ENCODE measurements at regions of chr19 and their contacts with region 1.

Region 1: DNA sequence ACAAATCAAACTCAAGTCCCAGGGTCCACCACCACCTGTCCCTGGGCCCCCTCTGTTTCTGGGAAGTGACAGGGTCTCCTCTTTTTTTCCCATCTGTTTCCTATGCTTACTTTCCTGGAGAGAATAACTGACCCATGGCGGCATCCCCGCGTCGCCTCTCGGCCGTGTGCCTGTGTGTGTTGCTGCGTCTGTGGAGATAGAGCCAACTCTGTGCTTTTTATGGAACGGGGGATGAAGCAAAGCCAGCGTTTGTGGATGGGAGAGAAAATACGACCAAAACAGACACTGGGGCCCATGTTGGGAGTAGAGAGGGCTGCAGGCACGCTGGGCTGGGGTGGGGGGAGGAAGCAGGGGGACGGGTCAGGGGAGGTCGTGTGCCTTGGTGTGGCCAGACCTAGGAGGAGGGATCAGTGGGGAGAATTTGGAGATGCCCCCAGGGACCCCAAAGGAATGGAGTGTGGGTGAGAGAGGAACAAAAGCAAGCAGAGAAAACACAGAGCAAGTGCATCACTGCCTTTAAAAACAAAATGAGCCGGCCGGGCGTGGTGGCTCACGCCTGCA is 16.6 kb downstream of the PLK5 start:
- DNase-seq: no peak
- H3K4me3 Mint-ChIP-seq: no peak overlapping the region
- H3K27ac Mint-ChIP-seq: no peak overlapping the region
- H3K4me1 Mint-ChIP-seq: no peaks in the 10 kb centered on the region
- H3K27me3 Mint-ChIP-seq: peaks cover 13% of the 10 kb centered on the region

Region 2: DNA sequence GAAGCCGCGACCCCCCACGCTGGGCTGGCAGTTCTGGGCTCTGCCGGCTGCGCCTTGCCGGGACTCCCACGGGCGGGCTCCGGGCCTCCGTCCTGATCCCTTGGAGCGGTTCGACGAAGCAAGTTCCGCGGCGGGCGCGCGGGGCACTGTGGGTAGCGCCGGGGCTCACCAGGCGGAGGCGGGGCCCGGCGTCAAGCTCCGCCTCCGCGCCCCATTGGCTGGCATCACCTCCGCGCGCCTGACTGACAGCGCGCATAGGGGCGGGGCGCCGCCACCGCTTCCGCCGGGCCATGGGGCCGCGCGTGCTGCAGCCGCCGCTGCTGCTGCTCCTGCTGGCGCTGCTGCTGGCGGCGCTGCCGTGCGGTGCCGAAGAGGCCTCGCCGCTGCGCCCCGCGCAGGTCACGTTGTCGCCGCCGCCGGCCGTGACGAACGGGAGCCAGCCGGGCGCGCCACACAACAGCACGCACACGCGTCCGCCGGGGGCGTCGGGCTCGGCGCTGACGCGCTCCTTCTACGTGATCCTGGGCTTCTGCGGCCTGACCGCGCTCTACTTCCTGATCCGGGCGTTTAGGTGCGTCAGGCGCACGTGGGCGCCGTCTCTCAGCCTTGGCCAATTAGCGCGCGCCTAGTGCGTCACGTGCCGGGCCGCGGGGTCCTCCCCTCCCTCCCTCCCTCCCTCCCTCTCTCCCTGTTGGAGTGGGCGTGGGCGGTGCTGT is 265.0 kb before region 1 on chr19 and contains the start of gene FAM174C:
- CTCF ChIA-PET with region 1: no interaction called
- POLR2A ChIA-PET with region 1: no interaction called
- DNase-seq: peak; percentile 96
- H3K4me3 Mint-ChIP-seq: peak within 1 kb of the TSS; percentile 82
- H3K27ac Mint-ChIP-seq: peak within 1 kb of the TSS; percentile 96
- H3K4me1 Mint-ChIP-seq: peaks cover 55% of the 10 kb centered on the region
- H3K27me3 Mint-ChIP-seq: no peaks in the 10 kb centered on the region
- total RNA-seq, gene FAM174C: 45.9 to 50.1 TPM

Region 3: GRCh38 chr19:1592755-1593500 is 52.5 kb after region 1 on chr19 and contains the start of gene MBD3:
- CTCF ChIA-PET with region 1: no interaction called
- POLR2A ChIA-PET with region 1: no interaction called
- DNase-seq: peak; percentile 89
- H3K4me3 Mint-ChIP-seq: peak within 1 kb of the TSS; percentile 85
- H3K27ac Mint-ChIP-seq: peak within 1 kb of the TSS; percentile 83
- H3K4me1 Mint-ChIP-seq: peaks cover 19% of the 10 kb centered on the region
- H3K27me3 Mint-ChIP-seq: no peaks in the 10 kb centered on the region
- total RNA-seq, gene MBD3: 63.6 to 66.8 TPM

Region 4: GRCh38 chr19:1672038-1672768 is 131.8 kb after region 1 on chr19:
- CTCF ChIA-PET with region 1: interaction called, 19 read pairs
- POLR2A ChIA-PET with region 1: no interaction called
- DNase-seq: peak; percentile 53
- H3K4me3 Mint-ChIP-seq: no peak overlapping the region
- H3K27ac Mint-ChIP-seq: no peak overlapping the region
- H3K4me1 Mint-ChIP-seq: peaks cover 7% of the 10 kb centered on the region
- H3K27me3 Mint-ChIP-seq: peaks cover 50% of the 10 kb centered on the region